ENCODE measurements at regions of chr12 and their contacts with region 1.

Region 1: DNA sequence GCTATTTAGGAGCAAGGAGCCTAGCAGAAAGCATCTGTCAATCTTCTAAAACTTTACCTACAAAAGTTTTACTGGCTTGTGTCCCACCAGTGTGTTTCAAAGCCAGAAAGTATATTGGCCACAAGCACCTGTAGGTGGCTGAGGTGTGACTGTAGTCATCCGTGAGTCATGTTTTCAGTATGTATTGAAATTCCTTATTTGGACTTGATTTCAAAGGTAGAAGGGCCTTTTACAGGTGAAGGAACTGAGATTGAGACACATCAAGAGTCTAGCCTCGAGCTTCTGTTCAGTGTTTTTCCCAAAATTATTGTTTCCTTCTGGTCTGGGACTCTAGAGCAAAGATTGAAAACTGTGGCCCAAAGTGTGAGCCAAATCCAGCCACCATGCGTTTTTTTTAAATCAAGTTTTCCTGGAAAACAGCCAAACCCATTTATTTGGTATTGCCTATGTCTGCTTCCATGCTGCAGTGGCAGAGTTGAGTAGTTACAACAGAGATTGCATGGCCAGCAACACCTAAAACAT is 195.3 kb upstream of the BCL2L14 start:
- DNase-seq: no peak
- H3K4me3 Mint-ChIP-seq: peak overlapping the region; percentile 9
- H3K27ac Mint-ChIP-seq: peak overlapping the region; percentile 61
- H3K4me1 Mint-ChIP-seq: peaks cover 73% of the 10 kb centered on the region
- H3K27me3 Mint-ChIP-seq: no peaks in the 10 kb centered on the region

Region 2: GRCh38 chr12:11894890-11895289 is 19.4 kb after region 1 on chr12:
- intact Hi-C with region 1: loop called (anchors 2 kb)
- DNase-seq: no peak
- H3K4me3 Mint-ChIP-seq: no peak overlapping the region
- H3K27ac Mint-ChIP-seq: peak overlapping the region; percentile 53
- H3K4me1 Mint-ChIP-seq: peaks cover 78% of the 10 kb centered on the region
- H3K27me3 Mint-ChIP-seq: no peaks in the 10 kb centered on the region

Measured in activated T-helper 1 cell treated with anti-CD3 and anti-CD28 coated beads, Interleukin-12 subunit alpha, Interleukin-12 subunit beta, Interleukin-2, Interleukin-4 antibody, amounts not matched to agents 30 ng/mL and 10 ng/mL and 1 ng/mL, durations not matched to agents 14 hours and 24 hours and 36 hours (primary cell).